Left lung (tissue), 14 donors: ENCODE measurements at regions of chr10 and their contacts with region 1.

Region 1: GRCh38 chr10:127715782-127716378 is 21.1 kb upstream of the FOXI2 start:
- DNase-seq: peak in 1 of 4 donors; percentile 21
- ATAC-seq: peak; percentile 39
- H3K4me3 ChIP-seq: no peak overlapping the region
- H3K27ac ChIP-seq: no peak overlapping the region
- H3K4me1 ChIP-seq: no peaks in the 10 kb centered on the region
- H3K27me3 ChIP-seq: no peaks in the 10 kb centered on the region
- CTCF ChIP-seq: peak in 1 of 2 donors; percentile 41

Region 2: GRCh38 chr10:127563718-127564553 is 151.9 kb before region 1 on chr10:
- intact Hi-C with region 1: no loop called
- DNase-seq: peak in 1 of 4 donors; percentile 85
- ATAC-seq: peak; percentile 94
- H3K4me3 ChIP-seq: no peak overlapping the region
- H3K27ac ChIP-seq: no peak overlapping the region
- H3K4me1 ChIP-seq: no peaks in the 10 kb centered on the region
- H3K27me3 ChIP-seq: no peaks in the 10 kb centered on the region
- CTCF ChIP-seq: peak; percentile 68 to 77

Region 3: DNA sequence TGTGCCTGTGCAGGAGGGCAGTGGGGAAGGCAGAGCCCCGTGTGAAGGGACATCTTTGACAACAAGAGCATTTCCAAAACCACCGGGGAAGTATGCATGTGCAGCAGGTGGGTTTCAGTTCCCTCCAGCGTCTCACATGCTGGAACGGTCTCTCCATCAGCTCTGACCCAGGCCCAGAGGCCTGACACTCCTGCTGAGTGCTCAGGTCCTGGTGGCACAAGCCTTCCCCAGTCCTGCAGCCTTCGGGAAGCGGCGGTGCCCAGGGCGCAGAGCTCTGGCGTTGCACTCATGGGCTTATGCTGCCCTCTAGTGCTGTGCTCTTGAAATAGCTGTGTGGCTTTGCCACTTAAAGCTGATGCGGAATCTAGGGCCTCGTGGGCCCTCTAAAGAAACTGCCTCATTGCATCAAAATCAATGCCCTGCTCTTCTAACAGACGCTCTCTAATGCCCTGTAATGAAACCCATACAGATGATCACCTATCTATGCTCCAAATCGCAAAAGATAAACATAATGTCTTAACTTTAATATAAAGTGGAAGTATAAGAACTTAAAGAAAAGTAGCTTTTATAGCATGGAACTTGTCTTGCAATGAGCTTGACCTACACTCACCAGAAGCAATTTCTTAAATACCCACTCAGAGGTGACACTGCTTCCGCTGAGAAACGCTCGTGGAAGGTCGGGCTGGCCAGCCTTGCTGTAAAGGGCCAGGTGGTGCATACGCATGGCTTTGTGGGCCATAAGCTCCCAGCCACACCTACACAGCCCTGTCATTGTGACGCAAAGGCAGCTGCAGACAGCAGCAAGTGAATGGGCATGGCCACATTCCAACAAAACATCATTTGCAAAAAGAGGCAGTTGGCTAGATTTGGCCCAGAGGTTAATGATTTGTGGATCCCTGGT is 138.2 kb after region 1 on chr10:
- intact Hi-C with region 1: loop called in 1 of 2 experiments (anchors 10 kb)
- DNase-seq: peak; percentile 49 to 90 (median 69)
- ATAC-seq: peak; percentile 98
- H3K4me3 ChIP-seq: no peak overlapping the region
- H3K27ac ChIP-seq: no peak overlapping the region
- H3K4me1 ChIP-seq: no peaks in the 10 kb centered on the region
- H3K27me3 ChIP-seq: peaks cover 0 to 8% of the 10 kb centered on the region in 2 donors
- CTCF ChIP-seq: peak; percentile 70 to 80